Dendritic cell treated with granulocyte-macrophage colony-stimulating factor and Interleukin-4, amounts not matched to agents 40 ng/mL and 50 ng/mL, for 4 days (primary cell): ENCODE measurements at regions of chr4 and their contacts with region 1.

Region 1: GRCh38 chr4:145732895-145733880 is 53.2 kb downstream of the C4orf51 start:
- H3K4me3 Mint-ChIP-seq: peak overlapping the region; percentile 85
- H3K27ac Mint-ChIP-seq: peak overlapping the region; percentile 98
- H3K4me1 Mint-ChIP-seq: peaks cover 28% of the 10 kb centered on the region
- H3K27me3 Mint-ChIP-seq: peaks cover 16% of the 10 kb centered on the region

Region 2: GRCh38 chr4:145171911-145172310 is 561.3 kb before region 1 on chr4:
- intact Hi-C with region 1: no loop called
- H3K4me3 Mint-ChIP-seq: no peak overlapping the region
- H3K27ac Mint-ChIP-seq: no peak overlapping the region
- H3K4me1 Mint-ChIP-seq: peaks cover 26% of the 10 kb centered on the region
- H3K27me3 Mint-ChIP-seq: no peaks in the 10 kb centered on the region

Region 3: DNA sequence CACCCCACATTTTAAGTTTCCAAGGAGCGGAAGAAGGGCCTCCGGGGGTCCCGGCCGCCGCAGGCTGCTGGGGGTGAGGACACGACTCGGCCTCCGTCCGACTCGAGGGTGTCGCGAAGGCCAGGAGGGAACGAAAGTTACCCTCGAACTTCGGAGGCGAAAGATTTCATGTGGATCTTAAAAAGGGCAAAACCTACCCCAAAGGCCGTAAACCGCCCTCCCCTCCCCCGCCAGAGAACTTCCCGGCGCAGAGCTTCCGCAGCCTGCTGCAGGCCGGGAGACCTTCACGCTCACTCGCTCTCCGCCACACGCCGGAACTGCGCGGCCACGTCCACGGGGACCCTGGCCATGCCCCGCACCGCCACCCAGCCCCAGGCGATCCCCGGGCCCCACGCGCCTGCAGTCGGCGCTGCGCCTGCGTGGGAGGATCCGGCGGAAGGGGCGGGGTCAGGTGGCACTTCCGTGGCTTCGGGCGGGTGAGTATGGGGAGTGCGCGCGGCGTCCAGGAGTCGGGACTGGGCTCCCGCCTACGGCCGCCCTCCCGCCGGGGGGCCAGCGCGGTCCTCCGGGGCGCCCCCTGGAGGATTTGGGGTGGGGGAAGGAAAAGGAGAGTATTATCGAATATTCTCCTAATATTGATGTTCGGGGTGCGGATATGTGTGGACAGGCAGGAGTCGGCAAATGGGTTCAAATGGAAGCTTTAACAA is 114.1 kb before region 1 on chr4 and contains the start of gene MMAA:
- intact Hi-C with region 1: loop called (anchors 2 kb)
- H3K4me3 Mint-ChIP-seq: peak within 1 kb of the TSS; percentile 97
- H3K27ac Mint-ChIP-seq: peak within 1 kb of the TSS; percentile 99
- H3K4me1 Mint-ChIP-seq: peaks cover 21% of the 10 kb centered on the region
- H3K27me3 Mint-ChIP-seq: no peaks in the 10 kb centered on the region

Region 4: DNA sequence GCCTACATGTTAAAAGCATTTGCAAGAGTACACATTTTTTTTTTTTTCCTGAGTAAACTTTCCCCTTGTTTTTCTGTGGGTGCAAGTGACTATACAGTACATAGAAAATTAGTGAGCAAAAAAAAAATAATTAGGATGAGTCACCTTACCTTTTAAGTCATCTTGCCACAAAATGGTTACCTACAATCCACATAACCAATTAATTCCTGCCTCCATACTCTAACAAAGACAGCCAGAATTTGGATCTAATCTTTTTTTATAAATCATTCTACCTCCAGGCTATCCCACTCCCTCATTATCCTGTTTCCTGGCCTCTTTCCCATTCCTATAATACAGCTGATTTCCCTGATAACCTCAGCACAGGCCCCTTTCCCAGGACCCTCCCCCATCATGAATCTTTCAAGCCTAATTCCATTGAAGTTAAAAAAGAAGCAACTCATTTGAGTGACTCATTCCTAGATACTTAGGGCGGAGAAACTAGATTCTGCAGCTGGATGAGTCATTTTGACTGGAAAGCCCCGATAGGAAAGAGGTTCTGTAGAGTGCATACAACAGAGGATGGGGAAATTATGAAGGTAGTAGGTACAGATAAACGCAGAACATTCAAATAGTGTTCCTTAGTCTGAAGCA is 74.9 kb after region 1 on chr4:
- intact Hi-C with region 1: loop called (anchors 1 kb)
- H3K4me3 Mint-ChIP-seq: peak overlapping the region; percentile 30
- H3K27ac Mint-ChIP-seq: peak overlapping the region; percentile 89
- H3K4me1 Mint-ChIP-seq: peaks cover 21% of the 10 kb centered on the region
- H3K27me3 Mint-ChIP-seq: no peaks in the 10 kb centered on the region

Region 5: DNA sequence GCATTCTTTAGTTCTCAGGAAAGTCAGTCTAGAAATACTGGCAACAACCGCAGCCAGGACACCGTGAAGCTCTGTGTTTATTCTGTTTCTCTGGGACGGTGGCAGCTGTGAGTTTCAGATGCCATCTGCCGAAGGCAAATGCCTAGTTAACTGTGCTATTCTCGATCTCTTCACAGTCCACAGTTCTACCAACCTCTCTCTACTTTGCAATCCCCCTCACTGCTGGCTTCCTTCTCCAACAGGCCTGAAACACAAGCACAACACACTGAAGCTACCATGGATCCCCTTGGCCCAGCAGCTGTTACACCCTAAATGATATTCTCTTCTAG is 86.6 kb after region 1 on chr4:
- intact Hi-C with region 1: loop called (anchors 5 kb)
- H3K4me3 Mint-ChIP-seq: no peak overlapping the region
- H3K27ac Mint-ChIP-seq: peak overlapping the region; percentile 80
- H3K4me1 Mint-ChIP-seq: peaks cover 46% of the 10 kb centered on the region
- H3K27me3 Mint-ChIP-seq: no peaks in the 10 kb centered on the region

Region 6: GRCh38 chr4:145936142-145936996 is 203.2 kb after region 1 on chr4:
- intact Hi-C with region 1: loop called (anchors 5 kb)
- H3K4me3 Mint-ChIP-seq: peak overlapping the region; percentile 96
- H3K27ac Mint-ChIP-seq: peak overlapping the region; percentile 80
- H3K4me1 Mint-ChIP-seq: peaks cover 33% of the 10 kb centered on the region
- H3K27me3 Mint-ChIP-seq: peaks cover 49% of the 10 kb centered on the region